ENCODE measurements at regions of chr5 and their contacts with region 1.

Region 1: GRCh38 chr5:111107371-111107770 is 15.2 kb downstream of the WDR36 start:
- DNase-seq: no peak
- H3K4me3 Mint-ChIP-seq: no peak overlapping the region
- H3K27ac Mint-ChIP-seq: no peak overlapping the region
- H3K4me1 Mint-ChIP-seq: no peaks in the 10 kb centered on the region
- H3K27me3 Mint-ChIP-seq: no peaks in the 10 kb centered on the region

Region 2: DNA sequence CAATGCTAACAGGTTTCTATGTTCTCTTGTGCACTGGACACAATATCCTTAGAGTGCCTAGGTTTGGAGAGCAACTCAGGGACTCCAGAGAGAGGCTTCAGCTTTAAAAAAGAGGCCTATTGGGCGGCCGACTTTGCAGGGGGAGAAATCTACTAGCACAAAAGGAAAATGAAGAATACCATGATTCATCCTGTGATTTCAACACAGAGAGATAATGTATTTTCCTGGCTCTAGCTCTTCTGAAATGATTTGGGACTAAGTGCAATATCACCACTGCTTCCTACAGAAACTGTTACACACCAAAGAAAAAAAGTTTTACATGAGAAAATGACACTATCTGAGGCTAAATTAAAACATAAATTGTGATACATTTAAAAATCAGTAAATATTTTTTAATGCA is 182.0 kb before region 1 on chr5:
- intact Hi-C with region 1: no loop called
- DNase-seq: no peak
- H3K4me3 Mint-ChIP-seq: no peak overlapping the region
- H3K27ac Mint-ChIP-seq: no peak overlapping the region
- H3K4me1 Mint-ChIP-seq: no peaks in the 10 kb centered on the region
- H3K27me3 Mint-ChIP-seq: peaks cover 4% of the 10 kb centered on the region

Region 3: GRCh38 chr5:111124793-111125192 is 17.4 kb after region 1 on chr5:
- intact Hi-C with region 1: loop called (anchors 2 kb)
- DNase-seq: no peak
- H3K4me3 Mint-ChIP-seq: no peak overlapping the region
- H3K27ac Mint-ChIP-seq: no peak overlapping the region
- H3K4me1 Mint-ChIP-seq: peaks cover 4% of the 10 kb centered on the region
- H3K27me3 Mint-ChIP-seq: no peaks in the 10 kb centered on the region